MCF 10A (cell line): ENCODE measurements at regions of chr1 and their contacts with region 1.

Region 1: DNA sequence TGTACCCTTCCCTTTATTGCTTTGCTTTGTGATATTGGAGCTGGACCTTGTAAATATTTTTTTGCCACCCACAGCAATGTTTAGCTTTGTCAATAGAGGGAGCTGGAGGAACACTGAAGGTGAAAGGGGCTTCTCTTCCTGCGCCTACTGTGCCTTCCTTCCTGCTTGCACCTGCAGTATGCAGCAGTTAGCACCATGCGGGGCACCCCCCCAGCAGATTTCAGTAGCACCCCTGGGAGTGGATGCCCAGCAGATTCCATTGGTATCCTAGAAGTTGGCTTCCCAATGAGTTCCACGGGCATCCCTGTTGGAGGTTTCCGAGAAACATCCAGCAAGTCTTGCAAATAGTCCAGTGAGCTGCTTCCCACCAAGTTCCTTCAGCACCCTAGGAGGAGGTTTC is 25.6 kb downstream of the S100A10 start:
- DNase-seq: peak; percentile 86
- H3K4me3 Mint-ChIP-seq: no peak overlapping the region
- H3K27ac Mint-ChIP-seq: no peak overlapping the region
- H3K4me1 Mint-ChIP-seq: peaks cover 34% of the 10 kb centered on the region
- H3K27me3 Mint-ChIP-seq: no peaks in the 10 kb centered on the region
- CTCF ChIP-seq: peak; percentile 91

Region 2: DNA sequence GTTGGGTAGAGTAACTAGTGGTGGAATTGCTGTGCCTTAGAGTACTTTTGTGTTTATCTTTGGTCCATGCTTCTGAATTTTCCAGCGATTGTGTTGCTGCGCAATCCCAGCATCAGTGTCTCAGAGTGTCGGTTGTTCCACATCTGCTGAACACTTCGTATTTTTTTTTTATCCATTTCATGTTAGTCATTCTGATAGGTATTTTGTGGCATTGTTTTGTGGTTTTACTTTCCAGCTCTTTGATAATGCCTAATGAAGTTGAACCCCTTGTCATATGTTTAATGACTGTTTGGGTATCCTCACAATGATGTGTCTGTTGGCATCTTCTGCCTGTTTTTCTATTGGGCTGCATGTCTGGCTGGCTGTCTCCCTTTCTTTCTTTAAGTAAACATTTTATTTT is 414.4 kb before region 1 on chr1:
- CTCF ChIA-PET with region 1: no interaction called
- POLR2A ChIA-PET with region 1: no interaction called
- intact Hi-C with region 1: no loop called
- DNase-seq: no peak
- H3K4me3 Mint-ChIP-seq: no peak overlapping the region
- H3K27ac Mint-ChIP-seq: no peak overlapping the region
- H3K4me1 Mint-ChIP-seq: peaks cover 31% of the 10 kb centered on the region
- H3K27me3 Mint-ChIP-seq: no peaks in the 10 kb centered on the region
- CTCF ChIP-seq: no peak

Region 3: GRCh38 chr1:151934048-151934493 is 34.0 kb before region 1 on chr1:
- CTCF ChIA-PET with region 1: interaction called, 116 read pairs
- POLR2A ChIA-PET with region 1: interaction called, 8 read pairs
- intact Hi-C with region 1: loop called (anchors 1 kb)
- DNase-seq: peak; percentile 82
- H3K4me3 Mint-ChIP-seq: no peak overlapping the region
- H3K27ac Mint-ChIP-seq: no peak overlapping the region
- H3K4me1 Mint-ChIP-seq: peaks cover 11% of the 10 kb centered on the region
- H3K27me3 Mint-ChIP-seq: no peaks in the 10 kb centered on the region
- CTCF ChIP-seq: peak; percentile 96

Region 4: DNA sequence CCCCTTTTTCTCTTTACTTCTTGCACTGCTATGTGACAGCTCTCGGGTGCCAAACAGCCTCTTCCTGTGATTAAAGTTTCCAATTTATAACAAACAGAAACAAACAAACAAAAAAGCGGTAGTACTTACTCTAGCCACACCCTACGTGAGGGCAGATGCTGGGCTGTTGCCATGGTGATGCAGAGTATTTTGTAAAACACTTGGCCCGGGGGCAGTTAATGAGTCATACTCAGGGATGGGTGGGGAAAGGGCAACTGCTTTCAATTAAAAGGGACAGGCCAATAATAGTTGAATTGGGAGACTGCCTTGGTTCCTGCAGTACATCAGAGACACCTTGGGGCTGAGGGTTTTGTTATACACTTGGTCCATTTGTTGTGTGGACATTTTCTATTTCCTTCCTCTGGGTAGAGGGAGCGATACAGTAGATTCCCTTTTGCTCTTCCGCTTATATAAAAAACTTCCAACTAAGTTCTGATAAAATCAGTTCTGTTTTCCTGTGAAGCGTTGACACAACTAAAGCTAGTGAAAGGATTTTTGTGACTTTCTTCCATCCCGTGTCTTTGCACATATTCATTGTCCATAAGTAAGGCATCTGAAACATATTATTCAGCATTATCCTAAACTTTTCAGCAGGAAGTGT is 22.2 kb before region 1 on chr1:
- CTCF ChIA-PET with region 1: interaction called, 39 read pairs
- POLR2A ChIA-PET with region 1: interaction called, 87 read pairs
- intact Hi-C with region 1: loop called (anchors 2 kb)
- DNase-seq: peak; percentile 100
- H3K4me3 Mint-ChIP-seq: peak overlapping the region; percentile 16
- H3K27ac Mint-ChIP-seq: peak overlapping the region; percentile 99
- H3K4me1 Mint-ChIP-seq: peaks cover 33% of the 10 kb centered on the region
- H3K27me3 Mint-ChIP-seq: no peaks in the 10 kb centered on the region
- CTCF ChIP-seq: no peak

Region 5: GRCh38 chr1:151984313-151984956 is 16.4 kb after region 1 on chr1:
- CTCF ChIA-PET with region 1: interaction called, 543 read pairs
- POLR2A ChIA-PET with region 1: interaction called, 1,089 read pairs
- intact Hi-C with region 1: no loop called
- DNase-seq: no peak
- H3K4me3 Mint-ChIP-seq: no peak overlapping the region
- H3K27ac Mint-ChIP-seq: peak overlapping the region; percentile 51
- H3K4me1 Mint-ChIP-seq: peaks cover 72% of the 10 kb centered on the region
- H3K27me3 Mint-ChIP-seq: no peaks in the 10 kb centered on the region
- CTCF ChIP-seq: no peak

Region 6: DNA sequence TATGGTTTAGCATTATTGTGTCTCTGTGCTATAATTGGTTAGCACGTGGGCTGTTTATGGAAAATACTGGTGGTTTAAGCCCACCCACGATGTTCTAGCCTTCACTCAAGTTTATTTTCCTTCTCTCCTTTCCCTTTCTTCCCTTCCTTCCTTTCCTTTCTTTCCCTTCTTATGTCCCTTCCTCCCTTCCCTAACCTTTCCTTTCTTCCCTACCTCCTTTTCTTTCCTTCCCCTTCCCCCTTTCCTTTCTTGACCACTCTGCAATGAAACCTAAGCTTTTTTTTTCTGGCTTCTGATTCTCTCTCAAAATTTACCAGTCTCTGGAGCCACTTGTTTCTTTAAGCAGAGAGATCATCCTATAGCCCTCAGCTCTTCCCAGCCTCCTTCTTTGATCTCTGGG is 39.0 kb after region 1 on chr1:
- CTCF ChIA-PET with region 1: interaction called, 543 read pairs
- POLR2A ChIA-PET with region 1: interaction called, 184 read pairs
- intact Hi-C with region 1: no loop called
- DNase-seq: no peak
- H3K4me3 Mint-ChIP-seq: no peak overlapping the region
- H3K27ac Mint-ChIP-seq: no peak overlapping the region
- H3K4me1 Mint-ChIP-seq: peaks cover 16% of the 10 kb centered on the region
- H3K27me3 Mint-ChIP-seq: no peaks in the 10 kb centered on the region
- CTCF ChIP-seq: no peak